Adrenal gland (tissue), 19 donors: ENCODE measurements at regions of chr7 and their contacts with region 1.

Region 1: DNA sequence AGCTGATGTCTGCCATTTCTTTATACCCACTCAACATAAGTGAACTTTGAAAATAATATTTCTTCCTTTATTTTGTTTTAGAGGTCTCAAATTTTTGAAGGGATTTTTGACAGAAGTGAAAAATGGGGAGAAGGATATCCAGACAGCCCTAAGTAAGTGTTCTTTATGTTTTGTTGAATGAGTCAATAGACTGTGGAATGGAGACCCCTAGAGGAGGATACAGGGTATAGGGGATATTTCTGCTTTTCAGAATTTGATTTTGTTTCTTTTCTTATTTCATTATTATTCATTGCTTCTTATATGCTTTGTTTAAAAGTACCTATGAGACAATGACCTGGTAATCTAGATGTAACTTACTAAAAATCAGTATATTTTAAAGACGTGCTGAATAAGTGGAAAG is 34.4 kb downstream of the PLEKHA8 start:
- DNase-seq: no peak
- H3K4me3 ChIP-seq: no peak overlapping the region
- H3K27ac ChIP-seq: no peak overlapping the region
- H3K4me1 ChIP-seq: no peaks in the 10 kb centered on the region
- H3K27me3 ChIP-seq: no peaks in the 10 kb centered on the region
- CTCF ChIP-seq: peak; percentile 38 to 69 (median 52)
- POLR2A ChIP-seq: no peak

Region 2: GRCh38 chr7:29748286-29749108 is 314.1 kb before region 1 on chr7:
- intact Hi-C with region 1: loop called in 1 of 2 experiments (anchors 10 kb)
- DNase-seq: peak in 2 of 7 donors; percentile 9 to 26
- H3K4me3 ChIP-seq: no peak overlapping the region
- H3K27ac ChIP-seq: peak overlapping the region in 1 of 5 donors; percentile 49
- H3K4me1 ChIP-seq: peaks cover 0 to 7% of the 10 kb centered on the region in 2 donors
- H3K27me3 ChIP-seq: no peaks in the 10 kb centered on the region
- CTCF ChIP-seq: peak in 5 of 6 experiments; percentile 43 to 64 (median 57)
- POLR2A ChIP-seq: no peak

Region 3: GRCh38 chr7:29921404-29922010 is 141.1 kb before region 1 on chr7:
- intact Hi-C with region 1: loop called in 1 of 2 experiments (anchors 10 kb)
- DNase-seq: peak; percentile 25 to 73 (median 42)
- H3K4me3 ChIP-seq: no peak overlapping the region
- H3K27ac ChIP-seq: no peak overlapping the region
- H3K4me1 ChIP-seq: no peaks in the 10 kb centered on the region
- H3K27me3 ChIP-seq: no peaks in the 10 kb centered on the region
- CTCF ChIP-seq: peak; percentile 78 to 93 (median 90)
- POLR2A ChIP-seq: no peak

Region 4: DNA sequence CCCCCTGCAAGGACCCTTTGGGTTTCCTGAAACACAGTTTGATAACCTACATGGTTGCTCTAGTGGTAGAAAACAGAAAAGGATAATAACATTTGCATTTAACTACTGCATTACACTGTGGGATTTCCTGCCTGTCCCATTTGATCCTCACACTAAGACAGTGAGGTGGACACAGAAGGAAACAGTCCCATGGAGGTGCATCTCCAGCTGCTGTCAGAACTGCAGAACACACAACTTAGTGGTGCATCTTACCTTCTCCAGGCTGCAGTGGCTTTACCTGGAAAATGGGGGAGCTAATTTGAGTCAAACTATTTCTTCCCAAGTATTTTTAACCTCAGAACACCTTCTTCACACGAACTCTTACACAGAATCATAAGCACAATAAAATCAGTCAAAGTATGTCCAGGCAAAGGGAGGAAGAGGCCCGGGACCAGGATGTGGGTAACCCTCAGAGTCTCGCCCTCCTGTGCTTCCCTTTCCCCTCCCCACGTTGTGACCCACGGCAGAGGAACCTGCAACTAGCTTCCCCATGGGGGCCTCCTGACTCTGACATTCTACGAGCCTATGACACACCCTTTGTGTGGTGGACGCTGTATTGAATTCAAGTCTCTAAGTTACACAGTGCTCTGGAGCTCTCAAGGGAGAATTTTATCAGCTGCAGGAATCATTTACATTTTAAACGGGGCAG is 106.6 kb before region 1 on chr7:
- intact Hi-C with region 1: loop called in 1 of 2 experiments (anchors 10 kb)
- DNase-seq: peak in 1 of 7 donors; percentile 18
- H3K4me3 ChIP-seq: no peak overlapping the region
- H3K27ac ChIP-seq: no peak overlapping the region
- H3K4me1 ChIP-seq: no peaks in the 10 kb centered on the region
- H3K27me3 ChIP-seq: no peaks in the 10 kb centered on the region
- CTCF ChIP-seq: no peak
- POLR2A ChIP-seq: no peak